ENCODE measurements at regions of chr17 and their contacts with region 1.

Region 1: GRCh38 chr17:2847381-2848333 is 51.4 kb downstream of the RAP1GAP2 start:
- DNase-seq: no peak
- H3K4me3 ChIP-seq: no peak overlapping the region
- H3K27ac ChIP-seq: no peak overlapping the region
- H3K4me1 ChIP-seq: no peaks in the 10 kb centered on the region
- H3K27me3 ChIP-seq: peaks cover 8 to 12% of the 10 kb centered on the region in 2 experiments
- CTCF ChIP-seq: no peak
- POLR2A ChIP-seq: no peak

Region 2: GRCh38 chr17:2486709-2487705 is 360.6 kb before region 1 on chr17:
- CTCF ChIA-PET with region 1: no interaction called
- POLR2A ChIA-PET with region 1: no interaction called
- dilution Hi-C with region 1: no loop called
- intact Hi-C with region 1: no loop called
- DNase-seq: no peak
- H3K4me3 ChIP-seq: no peak overlapping the region
- H3K27ac ChIP-seq: no peak overlapping the region
- H3K4me1 ChIP-seq: peaks cover 14% of the 10 kb centered on the region
- H3K27me3 ChIP-seq: no peaks in the 10 kb centered on the region
- CTCF ChIP-seq: no peak
- POLR2A ChIP-seq: no peak

Region 3: GRCh38 chr17:2770129-2770528 is 77.5 kb before region 1 on chr17:
- CTCF ChIA-PET with region 1: no interaction called
- POLR2A ChIA-PET with region 1: no interaction called
- dilution Hi-C with region 1: no loop called
- intact Hi-C with region 1: no loop called
- DNase-seq: no peak
- H3K4me3 ChIP-seq: no peak overlapping the region
- H3K27ac ChIP-seq: no peak overlapping the region
- H3K4me1 ChIP-seq: no peaks in the 10 kb centered on the region
- H3K27me3 ChIP-seq: no peaks in the 10 kb centered on the region
- CTCF ChIP-seq: no peak
- POLR2A ChIP-seq: no peak

Region 4: DNA sequence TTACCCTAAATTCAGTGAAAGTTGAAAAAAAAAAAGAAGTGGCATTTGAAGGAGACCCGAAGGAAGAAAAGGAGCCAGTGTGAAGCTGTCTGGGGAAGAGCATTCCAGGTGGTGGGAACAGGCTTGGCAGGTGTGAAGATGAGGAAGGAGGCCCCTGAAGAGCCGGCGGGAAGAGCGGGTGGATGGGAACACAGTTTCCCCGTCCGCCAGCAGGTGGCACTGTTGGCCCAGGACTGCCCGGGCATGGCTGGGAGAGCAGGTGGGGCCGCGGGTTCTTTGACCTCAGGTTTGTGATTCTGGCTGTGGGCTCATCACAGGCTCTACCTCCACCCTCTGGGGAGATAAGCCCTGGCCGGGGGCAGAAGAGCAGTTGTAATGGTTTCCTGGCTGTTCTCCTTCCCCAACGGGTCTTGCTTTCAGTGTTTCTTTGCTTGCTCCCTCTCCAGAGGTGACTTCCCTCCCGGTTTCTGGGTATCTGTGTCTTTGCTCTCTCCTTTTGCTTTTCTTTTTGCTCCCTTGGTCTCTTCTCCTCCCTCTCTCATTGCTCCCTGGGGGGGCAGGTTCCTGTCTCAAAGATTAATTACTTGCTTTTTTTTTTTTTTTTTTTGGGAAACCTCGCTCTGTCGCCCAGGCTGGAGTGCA is 19.1 kb before region 1 on chr17:
- CTCF ChIA-PET with region 1: interaction called, 13 read pairs
- POLR2A ChIA-PET with region 1: no interaction called
- dilution Hi-C with region 1: no loop called
- intact Hi-C with region 1: loop called (anchors 2 kb)
- DNase-seq: peak; percentile 44
- H3K4me3 ChIP-seq: no peak overlapping the region
- H3K27ac ChIP-seq: no peak overlapping the region
- H3K4me1 ChIP-seq: no peaks in the 10 kb centered on the region
- H3K27me3 ChIP-seq: no peaks in the 10 kb centered on the region
- CTCF ChIP-seq: peak; percentile 73 to 93
- POLR2A ChIP-seq: no peak

Region 5: GRCh38 chr17:2860045-2860444 is 12.4 kb after region 1 on chr17:
- CTCF ChIA-PET with region 1: interaction called, 12 read pairs
- POLR2A ChIA-PET with region 1: no interaction called
- dilution Hi-C with region 1: no loop called
- intact Hi-C with region 1: no loop called
- DNase-seq: no peak
- H3K4me3 ChIP-seq: no peak overlapping the region
- H3K27ac ChIP-seq: no peak overlapping the region
- H3K4me1 ChIP-seq: no peaks in the 10 kb centered on the region
- H3K27me3 ChIP-seq: peaks cover 15 to 19% of the 10 kb centered on the region in 2 experiments
- CTCF ChIP-seq: no peak
- POLR2A ChIP-seq: no peak

Region 6: GRCh38 chr17:2954898-2955445 is 107.3 kb after region 1 on chr17:
- CTCF ChIA-PET with region 1: interaction called, 4 read pairs
- POLR2A ChIA-PET with region 1: no interaction called
- dilution Hi-C with region 1: no loop called
- intact Hi-C with region 1: loop called (anchors 1 kb)
- DNase-seq: peak; percentile 88
- H3K4me3 ChIP-seq: no peak overlapping the region
- H3K27ac ChIP-seq: peak overlapping the region; percentile 77
- H3K4me1 ChIP-seq: peaks cover 25% of the 10 kb centered on the region
- H3K27me3 ChIP-seq: no peaks in the 10 kb centered on the region
- CTCF ChIP-seq: no peak
- POLR2A ChIP-seq: no peak

Region 7: GRCh38 chr17:3012926-3013581 is 165.4 kb after region 1 on chr17:
- CTCF ChIA-PET with region 1: interaction called, 108 read pairs
- POLR2A ChIA-PET with region 1: no interaction called
- dilution Hi-C with region 1: no loop called
- intact Hi-C with region 1: loop called (anchors 1 kb)
- DNase-seq: peak; percentile 62
- H3K4me3 ChIP-seq: no peak overlapping the region
- H3K27ac ChIP-seq: no peak overlapping the region
- H3K4me1 ChIP-seq: no peaks in the 10 kb centered on the region
- H3K27me3 ChIP-seq: no peaks in the 10 kb centered on the region
- CTCF ChIP-seq: peak; percentile 70 to 85
- POLR2A ChIP-seq: no peak

Measured in endothelial cell of umbilical vein (primary cell).